Mammary epithelial cell (primary cell): ENCODE measurements at regions of chr5 and their contacts with region 1.

Region 1: DNA sequence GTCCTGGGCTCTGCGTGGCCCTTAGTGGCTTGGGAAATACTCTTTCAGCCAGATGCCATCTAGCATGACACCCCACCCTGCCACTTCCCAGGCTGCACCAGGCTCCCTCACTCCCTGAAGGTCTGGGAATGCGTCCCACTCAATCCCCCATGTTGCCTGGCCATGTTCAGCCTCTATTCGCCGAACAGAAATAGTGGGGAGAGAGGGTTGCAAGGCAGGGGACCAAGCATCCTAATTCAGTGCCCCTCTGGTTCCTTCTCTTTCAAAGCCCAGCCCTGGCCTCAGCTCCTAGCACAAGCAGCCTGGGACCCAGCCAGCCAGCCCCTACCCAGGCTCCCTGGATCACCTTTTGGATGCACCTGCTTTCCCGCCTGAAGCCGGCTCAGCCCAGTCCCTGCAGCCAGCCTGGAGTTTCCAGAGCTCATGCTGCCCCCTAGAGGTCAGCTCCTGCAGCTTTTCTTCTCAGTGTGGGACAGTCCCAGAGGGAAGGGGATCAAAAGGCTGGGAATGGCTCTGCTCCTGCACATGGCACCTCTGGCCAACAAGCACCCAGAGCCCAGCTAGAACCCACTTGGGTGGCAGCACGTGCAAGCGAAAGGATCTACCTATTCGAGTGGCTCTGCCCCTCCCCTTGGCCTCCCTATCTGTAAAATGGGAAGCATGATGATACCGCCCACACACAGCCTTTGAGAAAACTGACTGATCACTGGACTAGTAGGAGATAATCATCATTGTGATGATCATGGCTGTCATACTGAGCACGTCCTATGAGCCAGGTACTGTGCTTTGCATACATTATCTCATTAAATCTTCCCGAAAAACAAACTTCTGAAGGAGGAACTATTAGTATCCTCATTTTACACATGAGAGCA is 48.7 kb upstream of the C5orf58 start:
- DNase-seq: peak; percentile 35
- H3K4me3 ChIP-seq: no peak overlapping the region
- H3K27ac ChIP-seq: no peak overlapping the region
- H3K4me1 ChIP-seq: no peaks in the 10 kb centered on the region
- H3K27me3 ChIP-seq: no peaks in the 10 kb centered on the region
- CTCF ChIP-seq: peak; percentile 85 to 91

Region 2: DNA sequence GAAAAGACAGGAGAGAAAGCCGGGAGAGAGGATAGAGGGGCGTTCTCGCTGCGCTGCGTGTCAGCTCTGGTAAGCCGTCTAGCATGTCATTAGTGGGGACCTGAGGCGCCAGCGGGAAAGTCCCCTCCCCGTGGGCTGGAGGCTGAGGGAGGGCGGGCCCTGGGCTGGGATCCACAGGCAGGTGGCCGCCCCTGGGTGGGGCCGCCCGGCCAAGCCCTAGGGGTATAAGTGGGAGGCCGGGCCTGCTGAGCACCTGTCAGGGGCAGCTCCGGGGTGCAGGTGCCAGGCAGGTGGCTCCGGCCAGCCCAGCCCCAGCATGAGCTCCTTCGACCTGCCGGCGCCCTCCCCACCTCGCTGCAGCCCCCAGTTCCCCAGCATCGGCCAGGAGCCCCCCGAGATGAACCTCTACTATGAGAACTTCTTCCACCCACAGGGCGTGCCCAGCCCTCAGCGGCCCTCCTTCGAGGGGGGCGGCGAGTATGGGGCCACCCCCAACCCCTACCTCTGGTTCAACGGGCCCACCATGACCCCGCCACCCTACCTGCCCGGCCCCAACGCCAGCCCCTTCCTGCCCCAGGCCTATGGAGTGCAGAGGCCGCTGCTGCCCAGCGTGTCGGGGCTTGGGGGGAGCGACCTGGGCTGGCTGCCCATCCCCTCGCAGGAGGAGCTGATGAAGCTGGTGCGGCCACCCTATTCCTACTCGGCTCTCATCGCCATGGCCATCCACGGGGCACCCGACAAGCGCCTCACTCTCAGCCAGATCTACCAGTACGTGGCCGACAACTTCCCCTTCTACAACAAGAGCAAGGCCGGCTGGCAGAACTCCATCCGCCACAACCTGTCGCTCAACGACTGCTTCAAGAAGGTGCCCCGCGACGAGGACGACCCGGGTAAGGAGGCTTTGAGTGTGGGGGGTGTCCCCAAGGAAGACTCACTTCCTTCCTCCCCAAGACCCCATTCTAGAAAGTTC is 78.1 kb before region 1 on chr5 and contains the start of gene FOXI1:
- CTCF ChIA-PET with region 1: no interaction called
- dilution Hi-C with region 1: loop called (anchors 5 kb)
- in situ Hi-C with region 1: loop called (anchors 5 kb)
- intact Hi-C with region 1: no loop called
- DNase-seq: no peak
- H3K4me3 ChIP-seq: no peak within 1 kb of the TSS
- H3K27ac ChIP-seq: no peak within 1 kb of the TSS
- H3K4me1 ChIP-seq: no peaks in the 10 kb centered on the region
- H3K27me3 ChIP-seq: no peaks in the 10 kb centered on the region
- CTCF ChIP-seq: no peak
- total RNA-seq, gene FOXI1: not detected

Region 3: DNA sequence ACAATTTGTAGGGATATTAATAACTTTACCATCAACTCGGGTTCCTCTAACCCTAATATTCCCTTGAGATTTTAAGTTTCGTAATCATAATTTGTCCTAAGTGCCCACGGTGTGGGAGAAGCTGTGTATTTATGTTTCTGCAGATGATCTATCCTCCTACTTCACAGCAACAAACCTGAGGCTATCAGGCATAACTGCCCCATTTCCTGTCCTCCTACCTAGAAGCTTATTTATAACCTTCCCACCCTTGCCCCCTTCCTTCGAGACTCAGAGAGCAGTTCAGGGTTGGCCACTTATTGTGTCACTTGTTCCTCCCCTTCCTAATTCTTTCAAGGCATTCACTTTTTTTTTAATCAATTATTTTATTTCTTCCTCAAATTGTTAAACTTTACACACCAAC is 143.1 kb after region 1 on chr5:
- CTCF ChIA-PET with region 1: no interaction called
- dilution Hi-C with region 1: no loop called
- in situ Hi-C with region 1: no loop called
- intact Hi-C with region 1: no loop called
- DNase-seq: no peak
- H3K4me3 ChIP-seq: no peak overlapping the region
- H3K27ac ChIP-seq: no peak overlapping the region
- H3K4me1 ChIP-seq: peaks cover 6% of the 10 kb centered on the region
- H3K27me3 ChIP-seq: no peaks in the 10 kb centered on the region
- CTCF ChIP-seq: no peak

Region 4: DNA sequence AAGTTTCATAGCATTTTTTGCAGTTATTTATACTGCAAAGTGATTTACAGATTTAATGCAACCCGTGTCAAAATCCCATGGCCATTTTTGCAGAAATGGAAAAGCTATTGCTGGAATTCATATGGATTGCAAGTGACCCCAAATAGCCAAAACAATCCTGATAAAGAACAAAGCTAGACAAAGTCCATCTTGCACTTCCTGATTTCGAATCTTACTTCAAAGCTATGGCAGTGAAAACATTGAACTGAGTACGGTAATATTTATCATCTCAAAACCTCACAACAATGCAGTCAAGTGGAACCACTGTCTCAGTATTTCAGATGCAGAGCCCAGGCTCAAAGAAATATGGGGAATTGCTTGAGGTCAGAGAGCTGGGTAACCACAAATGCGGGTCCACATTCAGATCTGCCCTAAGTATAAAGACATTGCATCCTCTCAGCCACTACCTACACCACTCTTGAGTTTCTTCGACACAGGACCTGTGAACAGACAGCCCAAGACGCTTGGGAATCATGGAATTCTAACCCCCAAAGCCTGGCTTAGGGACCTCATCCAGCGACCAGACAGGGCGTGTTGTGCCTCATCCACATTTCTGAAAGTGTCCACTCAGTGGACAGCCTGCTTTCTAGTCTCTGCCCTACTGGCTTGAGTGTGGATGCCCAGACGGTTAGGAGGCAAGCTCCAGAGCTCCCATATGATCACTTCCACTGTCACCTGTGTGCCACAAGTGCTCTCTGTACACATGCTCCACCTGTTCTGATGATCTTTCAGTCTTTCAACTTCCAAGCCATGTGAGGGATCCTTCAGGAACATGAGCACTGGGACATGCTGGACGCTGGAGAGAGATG is 280.5 kb after region 1 on chr5:
- CTCF ChIA-PET with region 1: no interaction called
- dilution Hi-C with region 1: no loop called
- in situ Hi-C with region 1: no loop called
- intact Hi-C with region 1: no loop called
- DNase-seq: no peak
- H3K4me3 ChIP-seq: no peak overlapping the region
- H3K27ac ChIP-seq: no peak overlapping the region
- H3K4me1 ChIP-seq: peaks cover 13% of the 10 kb centered on the region
- H3K27me3 ChIP-seq: no peaks in the 10 kb centered on the region
- CTCF ChIP-seq: no peak